PC-3 (cell line): ENCODE measurements at regions of chr13 and their contacts with region 1.

Region 1: DNA sequence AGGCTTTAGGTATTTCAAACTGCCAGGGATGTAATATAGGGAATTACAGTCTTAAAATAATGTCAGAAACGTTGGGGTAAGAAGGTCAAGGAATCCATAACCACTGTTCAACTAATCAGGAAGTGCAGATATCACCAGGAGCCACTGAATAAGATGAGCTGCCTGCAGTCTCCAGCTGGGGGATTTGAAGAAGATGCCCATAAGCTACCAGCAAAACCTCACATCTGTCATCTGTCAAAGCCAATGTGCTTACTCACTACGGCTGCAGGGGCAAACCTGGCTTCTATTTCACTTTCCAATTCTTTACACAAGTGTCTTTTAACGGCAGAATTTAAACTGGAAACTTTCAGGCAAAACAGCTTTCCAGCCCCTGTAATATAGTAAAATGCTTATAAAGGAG is 1410.1 kb upstream of the ATXN8OS start:
- DNase-seq: no peak
- ATAC-seq: no peak
- H3K4me3 ChIP-seq: no peak overlapping the region
- H3K27ac ChIP-seq: no peak overlapping the region
- H3K4me1 ChIP-seq: no peaks in the 10 kb centered on the region
- H3K27me3 ChIP-seq: no peaks in the 10 kb centered on the region
- CTCF ChIP-seq: no peak

Region 2: DNA sequence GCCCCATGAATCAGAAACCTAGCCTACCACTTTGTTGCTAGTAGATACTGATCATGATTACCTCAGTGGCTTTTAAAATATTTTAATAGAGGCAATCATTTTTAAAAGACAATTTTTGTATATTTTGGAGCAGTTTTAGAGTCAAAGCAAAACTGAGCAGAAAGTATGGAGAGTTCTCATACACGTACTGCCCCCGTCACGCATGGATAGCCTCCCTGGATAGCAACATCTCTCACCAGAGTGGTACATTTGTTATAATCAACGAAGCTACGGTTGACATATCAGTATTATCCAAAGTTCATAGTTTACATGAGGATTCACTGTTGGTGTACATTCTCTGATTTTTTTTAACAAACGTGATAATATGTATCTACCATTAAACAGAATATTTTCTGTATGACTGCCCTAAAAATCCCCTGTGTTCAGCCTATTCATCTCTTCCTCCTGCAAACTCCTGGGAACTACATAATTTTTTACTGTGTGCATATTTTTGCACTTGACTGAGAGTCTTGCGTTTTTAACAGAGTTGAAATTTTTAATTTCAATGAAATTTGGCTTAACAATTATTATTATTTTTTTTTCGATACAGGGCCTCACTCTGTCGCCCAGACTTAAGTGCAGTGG is 30.7 kb before region 1 on chr13:
- CTCF ChIA-PET with region 1: no interaction called
- POLR2A ChIA-PET with region 1: no interaction called
- intact Hi-C with region 1: loop called (anchors 1 kb)
- DNase-seq: no peak
- ATAC-seq: no peak
- H3K4me3 ChIP-seq: no peak overlapping the region
- H3K27ac ChIP-seq: no peak overlapping the region
- H3K4me1 ChIP-seq: no peaks in the 10 kb centered on the region
- H3K27me3 ChIP-seq: no peaks in the 10 kb centered on the region
- CTCF ChIP-seq: no peak

Region 3: DNA sequence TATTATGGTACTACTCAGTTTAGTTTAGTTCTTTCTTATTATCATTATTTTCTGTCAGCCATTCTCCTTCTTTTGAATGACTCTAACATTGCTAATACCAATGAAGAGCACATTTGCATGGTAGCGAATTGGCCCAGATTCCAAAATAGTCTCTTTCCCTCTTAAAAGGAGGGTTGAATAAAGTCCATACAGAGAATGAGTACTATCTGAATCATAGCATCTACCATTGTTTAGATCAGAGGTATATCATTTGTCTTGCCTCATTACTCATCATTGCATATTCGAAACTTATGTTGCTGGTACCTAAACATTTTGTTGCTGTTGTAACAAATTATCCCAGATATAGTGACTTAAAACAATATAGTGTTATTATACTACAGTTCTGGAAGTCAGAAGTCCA is 174.8 kb after region 1 on chr13:
- CTCF ChIA-PET with region 1: no interaction called
- POLR2A ChIA-PET with region 1: no interaction called
- intact Hi-C with region 1: no loop called
- DNase-seq: peak; percentile 68
- ATAC-seq: peak; percentile 76
- H3K4me3 ChIP-seq: no peak overlapping the region
- H3K27ac ChIP-seq: peak overlapping the region; percentile 44
- H3K4me1 ChIP-seq: peaks cover 5% of the 10 kb centered on the region; the same call in 1 of the 2 replicates
- H3K27me3 ChIP-seq: no peaks in the 10 kb centered on the region
- CTCF ChIP-seq: no peak